Esophagus squamous epithelium (tissue), 5 donors: ENCODE measurements at regions of chr5 and their contacts with region 1.

Region 1: GRCh38 chr5:96344678-96345577 is 88.1 kb downstream of the PCSK1 start:
- DNase-seq: no peak
- H3K4me3 ChIP-seq: no peak overlapping the region
- H3K27ac ChIP-seq: no peak overlapping the region
- H3K4me1 ChIP-seq: peaks cover 0 to 18% (median 0%) of the 10 kb centered on the region in 3 donors
- H3K27me3 ChIP-seq: no peaks in the 10 kb centered on the region
- CTCF ChIP-seq: peak in 5 of 6 experiments; percentile 45 to 71 (median 60)
- POLR2A ChIP-seq: no peak

Region 2: GRCh38 chr5:96079075-96079474 is 265.9 kb before region 1 on chr5:
- intact Hi-C with region 1: no loop called
- DNase-seq: no peak
- H3K4me3 ChIP-seq: no peak overlapping the region
- H3K27ac ChIP-seq: peak overlapping the region in 2 of 4 donors; percentile 48 to 67
- H3K4me1 ChIP-seq: peaks cover 0 to 37% (median 3%) of the 10 kb centered on the region in 3 donors
- H3K27me3 ChIP-seq: no peaks in the 10 kb centered on the region
- CTCF ChIP-seq: no peak
- POLR2A ChIP-seq: no peak

Region 3: GRCh38 chr5:96601811-96602244 is 256.9 kb after region 1 on chr5:
- intact Hi-C with region 1: loop called (anchors 5 kb)
- DNase-seq: no peak
- H3K4me3 ChIP-seq: no peak overlapping the region
- H3K27ac ChIP-seq: no peak overlapping the region
- H3K4me1 ChIP-seq: peaks cover 0 to 4% (median 0%) of the 10 kb centered on the region in 3 donors
- H3K27me3 ChIP-seq: no peaks in the 10 kb centered on the region
- CTCF ChIP-seq: peak; percentile 47 to 86 (median 84)
- POLR2A ChIP-seq: no peak

Region 4: DNA sequence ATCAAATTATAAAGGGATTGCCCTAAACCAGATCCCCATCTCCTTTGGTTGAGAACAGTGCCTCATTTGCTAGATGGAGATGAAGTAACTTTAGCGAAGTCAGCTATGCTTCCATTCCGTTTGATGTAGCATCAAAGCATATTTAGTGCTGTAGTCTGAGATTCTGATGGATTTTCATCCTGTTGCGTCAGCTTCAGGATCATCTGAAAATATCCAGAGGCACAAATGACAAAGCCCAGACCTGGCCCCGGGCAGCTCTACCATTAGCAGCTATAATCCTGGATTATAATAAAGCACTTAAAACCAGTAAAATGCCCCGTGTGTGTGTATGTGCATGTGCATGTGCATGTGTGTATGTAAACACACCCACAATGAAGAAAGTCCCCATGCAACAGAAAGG is 418.1 kb after region 1 on chr5:
- intact Hi-C with region 1: no loop called
- DNase-seq: no peak
- H3K4me3 ChIP-seq: no peak overlapping the region
- H3K27ac ChIP-seq: no peak overlapping the region
- H3K4me1 ChIP-seq: no peaks in the 10 kb centered on the region
- H3K27me3 ChIP-seq: no peaks in the 10 kb centered on the region
- CTCF ChIP-seq: no peak
- POLR2A ChIP-seq: no peak